Gastrocnemius medialis (tissue), 4 donors: ENCODE measurements at regions of chr14 and their contacts with region 1.

Region 1: GRCh38 chr14:45134051-45134958 is at the start of gene FKBP3:
- DNase-seq: peak; percentile 98 to 99
- ATAC-seq: peak; percentile 89 to 93
- H3K4me3 ChIP-seq: peak within 1 kb of the TSS; percentile 66 to 89 (median 73)
- H3K27ac ChIP-seq: peak within 1 kb of the TSS; percentile 89 to 95 (median 91)
- H3K4me1 ChIP-seq: peaks cover 63% of the 10 kb centered on the region in 2 donors
- H3K27me3 ChIP-seq: no peaks in the 10 kb centered on the region
- CTCF ChIP-seq: peak in 1 of 5 experiments; percentile 14
- POLR2A ChIP-seq: peak; percentile 76 to 85
- total RNA-seq, gene FKBP3: 77.5 to 111 (median 94.6) TPM

Region 2: DNA sequence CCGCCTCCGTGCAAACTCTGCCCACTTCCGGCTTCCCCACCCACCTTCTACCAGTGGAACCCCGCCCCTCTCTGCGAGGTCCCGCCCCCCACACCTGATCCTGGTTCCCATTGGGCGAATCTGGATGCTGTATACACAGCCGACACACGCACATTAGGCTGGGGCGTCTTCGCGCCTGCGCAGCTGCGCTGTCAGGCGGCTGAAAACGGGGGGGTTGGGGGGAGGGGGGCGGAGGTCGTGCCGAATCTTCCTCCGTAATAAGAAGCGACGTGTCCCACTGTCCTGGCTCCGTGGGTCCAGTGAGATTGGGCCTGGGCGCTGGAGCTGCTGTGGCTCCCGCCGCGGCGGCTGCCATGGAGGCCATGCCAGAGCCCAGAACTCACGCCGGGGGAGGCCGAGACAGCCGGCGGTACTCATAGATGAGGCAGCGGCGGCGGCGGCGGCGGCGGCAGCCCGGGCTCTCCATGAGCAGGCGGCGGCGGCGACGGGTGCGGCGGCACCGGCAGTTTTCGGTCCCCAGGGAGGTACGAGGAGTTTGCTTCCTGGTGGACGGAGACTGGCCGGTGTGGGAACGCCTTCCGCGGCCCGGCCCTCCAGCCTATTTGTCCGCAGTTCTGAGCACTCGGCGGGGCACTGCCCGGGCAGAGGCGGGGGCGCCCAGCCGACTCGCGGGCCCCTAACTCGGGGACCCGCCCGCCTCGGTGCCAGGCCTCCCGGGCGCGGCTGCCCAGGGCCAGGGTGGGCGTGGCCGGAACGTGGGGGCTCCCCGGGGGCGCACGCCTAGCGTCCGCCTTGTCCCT is 237.1 kb before region 1 on chr14:
- in situ Hi-C with region 1: loop called in 1 of 4 experiments (anchors 10 kb)
- intact Hi-C with region 1: loop called (anchors 1 kb)
- DNase-seq: peak; percentile 97 to 99
- ATAC-seq: peak; percentile 97
- H3K4me3 ChIP-seq: peak overlapping the region; percentile 62 to 86 (median 67)
- H3K27ac ChIP-seq: peak overlapping the region; percentile 83 to 99 (median 92)
- H3K4me1 ChIP-seq: peaks cover 17% of the 10 kb centered on the region in 2 donors
- H3K27me3 ChIP-seq: no peaks in the 10 kb centered on the region
- CTCF ChIP-seq: peak in 1 of 5 experiments; percentile 8
- POLR2A ChIP-seq: peak; percentile 65 to 83

Region 3: GRCh38 chr14:44912041-44912869 is 222.1 kb before region 1 on chr14:
- in situ Hi-C with region 1: loop called in 1 of 4 experiments (anchors 10 kb)
- intact Hi-C with region 1: loop called (anchors 5 kb)
- DNase-seq: no peak
- ATAC-seq: no peak
- H3K4me3 ChIP-seq: peak overlapping the region; percentile 39 to 47 (median 44)
- H3K27ac ChIP-seq: no peak overlapping the region
- H3K4me1 ChIP-seq: no peaks in the 10 kb centered on the region
- H3K27me3 ChIP-seq: peaks cover 17 to 24% (median 22%) of the 10 kb centered on the region in 3 donors
- CTCF ChIP-seq: no peak
- POLR2A ChIP-seq: no peak

Region 4: GRCh38 chr14:44961604-44962333 is 172.5 kb before region 1 on chr14 and contains the starts of genes KLHL28 and TOGARAM1:
- in situ Hi-C with region 1: loop called (anchors 5 to 25 kb)
- intact Hi-C with region 1: loop called (anchors 1 kb)
- DNase-seq: peak; percentile 99
- ATAC-seq: peak; percentile 97 to 98
- H3K4me3 ChIP-seq: peak within 1 kb of the TSS; percentile 82 to 92 (median 90)
- H3K27ac ChIP-seq: peak within 1 kb of the TSS; percentile 88 to 95 (median 91)
- H3K4me1 ChIP-seq: peaks cover 70 to 77% of the 10 kb centered on the region in 2 donors
- H3K27me3 ChIP-seq: no peaks in the 10 kb centered on the region
- CTCF ChIP-seq: no peak
- POLR2A ChIP-seq: peak; percentile 74 to 83
- total RNA-seq, gene KLHL28: 7.3 to 11.9 (median 8.2) TPM
- total RNA-seq, gene TOGARAM1: 6.3 to 19.1 (median 9.7) TPM

Region 5: DNA sequence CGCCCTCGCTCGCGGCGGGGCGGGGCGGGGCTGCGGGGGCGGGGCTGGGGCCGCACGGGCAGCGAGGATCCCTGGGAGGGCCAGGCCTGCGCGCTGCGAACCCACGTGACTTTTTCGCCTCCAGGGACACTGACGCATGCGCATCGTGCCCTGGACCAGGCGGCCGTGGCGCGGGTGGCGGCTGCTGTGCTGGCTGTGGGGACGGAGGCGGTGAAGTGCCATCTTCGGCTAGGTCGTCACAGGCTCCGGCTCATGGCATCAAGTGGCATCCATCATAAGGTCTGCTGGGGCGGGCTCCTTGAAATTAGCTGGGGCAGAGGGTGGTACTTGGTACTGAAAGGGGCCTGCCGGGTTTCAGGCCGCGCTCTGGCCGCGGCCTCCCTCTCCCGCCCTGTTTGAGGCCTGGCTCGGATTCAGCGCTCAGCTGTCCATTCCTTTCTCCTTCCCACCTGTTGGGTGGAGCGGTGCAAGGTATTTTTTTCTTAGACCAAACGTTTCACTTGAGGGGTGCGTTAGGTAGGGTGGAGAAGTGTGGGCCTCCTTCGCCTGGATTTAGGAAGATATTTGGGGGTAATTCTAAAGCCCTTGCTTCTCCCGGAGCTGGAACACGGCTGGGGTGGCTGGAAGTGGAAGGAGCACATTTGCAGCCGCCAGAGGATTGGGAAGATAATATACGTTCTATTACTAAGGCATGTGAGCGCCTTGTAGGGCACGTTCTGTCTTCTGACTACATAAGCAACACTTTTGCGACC is 50.2 kb before region 1 on chr14 and contains the start of gene PRPF39:
- in situ Hi-C with region 1: loop called in 1 of 4 experiments (anchors 10 kb)
- intact Hi-C with region 1: loop called (anchors 1 kb)
- DNase-seq: peak; percentile 92 to 94
- ATAC-seq: peak; percentile 96
- H3K4me3 ChIP-seq: peak within 1 kb of the TSS; percentile 71 to 93 (median 74)
- H3K27ac ChIP-seq: peak within 1 kb of the TSS; percentile 86 to 95 (median 90)
- H3K4me1 ChIP-seq: peaks cover 30 to 42% of the 10 kb centered on the region in 2 donors
- H3K27me3 ChIP-seq: no peaks in the 10 kb centered on the region
- CTCF ChIP-seq: no peak
- POLR2A ChIP-seq: peak; percentile 85 to 86
- total RNA-seq, gene PRPF39: 11.9 to 22.7 (median 13.7) TPM

Region 6: GRCh38 chr14:45227566-45227965 is 93.3 kb after region 1 on chr14:
- in situ Hi-C with region 1: no loop called
- intact Hi-C with region 1: no loop called
- DNase-seq: no peak
- ATAC-seq: no peak
- H3K4me3 ChIP-seq: no peak overlapping the region
- H3K27ac ChIP-seq: no peak overlapping the region
- H3K4me1 ChIP-seq: no peaks in the 10 kb centered on the region
- H3K27me3 ChIP-seq: no peaks in the 10 kb centered on the region
- CTCF ChIP-seq: no peak
- POLR2A ChIP-seq: no peak

Region 7: GRCh38 chr14:45253068-45253753 is 118.9 kb after region 1 on chr14 and contains the start of gene MIS18BP1:
- in situ Hi-C with region 1: no loop called
- intact Hi-C with region 1: loop called (anchors 2 kb)
- DNase-seq: peak; percentile 87
- ATAC-seq: peak; percentile 93 to 96
- H3K4me3 ChIP-seq: peak within 1 kb of the TSS; percentile 66 to 83 (median 76)
- H3K27ac ChIP-seq: peak within 1 kb of the TSS; percentile 77 to 87 (median 82)
- H3K4me1 ChIP-seq: peaks cover 6 to 13% of the 10 kb centered on the region in 2 donors
- H3K27me3 ChIP-seq: no peaks in the 10 kb centered on the region
- CTCF ChIP-seq: peak; percentile 43 to 76 (median 60)
- POLR2A ChIP-seq: peak; percentile 31 to 51
- total RNA-seq, gene MIS18BP1: 4.7 to 7.0 (median 6.1) TPM

Region 8: DNA sequence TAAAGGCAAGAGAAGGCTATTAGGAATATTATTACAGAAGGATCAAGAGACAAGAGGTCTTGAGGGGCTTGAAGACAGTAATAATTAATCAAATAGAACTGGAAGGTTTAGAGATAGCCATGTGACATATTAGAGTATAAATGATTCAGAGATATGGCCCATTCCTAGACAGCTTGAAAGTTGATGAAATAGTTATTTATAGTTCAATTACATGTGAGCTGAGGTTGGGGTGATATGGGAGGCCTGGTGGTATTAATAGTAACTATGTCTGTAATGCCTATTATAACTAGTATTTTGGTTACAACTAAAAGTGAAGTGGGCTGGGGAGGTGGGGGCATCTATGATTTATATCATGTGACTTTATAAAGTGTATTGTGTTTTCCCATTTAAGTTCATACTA is 132.8 kb after region 1 on chr14:
- in situ Hi-C with region 1: no loop called
- intact Hi-C with region 1: loop called (anchors 5 kb)
- DNase-seq: no peak
- ATAC-seq: peak; percentile 86 to 94
- H3K4me3 ChIP-seq: no peak overlapping the region
- H3K27ac ChIP-seq: peak overlapping the region in 3 of 4 donors; percentile 16 to 45 (median 35)
- H3K4me1 ChIP-seq: peaks cover 6 to 11% of the 10 kb centered on the region in 2 donors
- H3K27me3 ChIP-seq: no peaks in the 10 kb centered on the region
- CTCF ChIP-seq: no peak
- POLR2A ChIP-seq: no peak